Activated CD4-positive, alpha-beta T cell treated with anti-CD3 and anti-CD28 coated beads, Interleukin-2, amount 10 ng/mL, durations not matched to agents 24 days and 14 days (primary cell): ENCODE measurements at regions of chr6 and their contacts with region 1.

Region 1: GRCh38 chr6:40550202-40551101 is 36.7 kb downstream of the LRFN2 start:
- DNase-seq: peak; percentile 78
- H3K4me3 Mint-ChIP-seq: no peak overlapping the region
- H3K27ac Mint-ChIP-seq: no peak overlapping the region
- H3K4me1 Mint-ChIP-seq: no peaks in the 10 kb centered on the region
- H3K27me3 Mint-ChIP-seq: peaks cover 7% of the 10 kb centered on the region

Region 2: DNA sequence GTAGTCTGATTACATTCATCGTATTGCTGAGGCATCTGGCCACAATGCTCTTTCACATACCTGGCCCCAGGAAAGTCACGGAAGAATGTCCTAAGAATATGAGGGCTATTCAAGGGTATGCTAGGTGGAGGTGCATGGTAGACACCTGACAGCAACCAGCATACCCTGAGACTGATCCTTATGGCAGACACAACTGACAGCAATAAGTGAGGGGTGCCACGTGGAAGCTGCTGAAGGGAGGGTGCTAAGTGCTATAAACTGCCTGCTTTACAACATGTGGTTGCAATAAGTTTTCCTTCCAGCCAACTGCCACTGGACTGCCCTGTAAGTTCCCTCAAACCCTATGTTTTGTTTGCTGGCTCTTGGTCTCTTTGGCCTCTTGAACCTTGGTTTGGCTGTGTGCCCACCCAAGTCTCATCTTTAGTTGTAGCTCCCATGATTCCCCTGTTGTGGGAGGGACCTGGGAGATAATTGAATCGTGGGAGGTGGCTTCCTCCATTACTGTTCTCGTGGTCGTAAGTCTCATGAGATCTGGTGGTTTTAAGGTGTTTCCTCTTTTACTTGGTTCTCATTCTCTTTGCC is 414.9 kb before region 1 on chr6:
- intact Hi-C with region 1: no loop called
- DNase-seq: no peak
- H3K4me3 Mint-ChIP-seq: no peak overlapping the region
- H3K27ac Mint-ChIP-seq: no peak overlapping the region
- H3K4me1 Mint-ChIP-seq: no peaks in the 10 kb centered on the region
- H3K27me3 Mint-ChIP-seq: no peaks in the 10 kb centered on the region

Region 3: DNA sequence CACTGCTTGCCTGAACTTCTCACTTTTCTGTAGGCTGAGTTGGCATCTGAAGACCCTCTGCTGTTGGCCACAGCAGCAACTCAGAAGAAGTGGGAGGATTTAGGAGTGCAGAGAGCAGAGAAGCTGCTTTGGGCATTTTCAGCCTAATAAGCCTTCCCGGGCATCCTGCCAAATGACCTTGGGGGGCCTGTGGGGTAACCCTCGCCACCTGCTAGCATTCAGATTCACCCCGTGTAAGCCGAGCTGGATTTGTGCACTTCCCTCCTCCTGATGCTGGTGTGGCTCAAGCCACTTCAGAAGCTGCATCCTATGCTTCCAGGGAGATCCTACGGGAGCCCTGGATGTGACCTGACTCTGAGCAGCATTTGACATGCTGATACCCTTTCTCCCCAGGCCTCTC is 78.1 kb before region 1 on chr6:
- intact Hi-C with region 1: no loop called
- DNase-seq: no peak
- H3K4me3 Mint-ChIP-seq: no peak overlapping the region
- H3K27ac Mint-ChIP-seq: no peak overlapping the region
- H3K4me1 Mint-ChIP-seq: peaks cover 5% of the 10 kb centered on the region
- H3K27me3 Mint-ChIP-seq: peaks cover 10% of the 10 kb centered on the region

Region 4: GRCh38 chr6:40912158-40912946 is 361.9 kb after region 1 on chr6:
- intact Hi-C with region 1: loop called (anchors 5 kb)
- DNase-seq: peak; percentile 82
- H3K4me3 Mint-ChIP-seq: no peak overlapping the region
- H3K27ac Mint-ChIP-seq: no peak overlapping the region
- H3K4me1 Mint-ChIP-seq: no peaks in the 10 kb centered on the region
- H3K27me3 Mint-ChIP-seq: peaks cover 20% of the 10 kb centered on the region